HepG2 (cell line): ENCODE measurements at regions of chr6 and their contacts with region 1.

Region 1: GRCh38 chr6:41779793-41780545 is at the start of gene FRS3:
- DNase-seq: peak; percentile 95
- ATAC-seq: peak; percentile 90
- H3K4me3 ChIP-seq: peak within 1 kb of the TSS; percentile 82 to 93 (median 92)
- H3K27ac ChIP-seq: peak within 1 kb of the TSS; percentile 24
- H3K4me1 ChIP-seq: peaks cover 34% of the 10 kb centered on the region
- H3K27me3 ChIP-seq: no peaks in the 10 kb centered on the region; a peak in 2 of 5 replicates
- CTCF ChIP-seq: peak; percentile 99
- EP300 ChIP-seq: peak; percentile 61 to 75; a peak in 3 of 4 replicates
- POLR2A ChIP-seq: no peak
- RAD21 ChIP-seq: peak; percentile 100
- total RNA-seq, gene FRS3: 1.5 and 3.0 TPM in 2 replicates

Region 2: GRCh38 chr6:41602864-41603608 is 176.9 kb before region 1 on chr6:
- CTCF ChIA-PET with region 1: no interaction called
- POLR2A ChIA-PET with region 1: no interaction called
- in situ Hi-C with region 1: no loop called
- intact Hi-C with region 1: loop called (anchors 5 kb)
- DNase-seq: peak; percentile 86
- ATAC-seq: peak; percentile 68
- H3K4me3 ChIP-seq: no peak overlapping the region
- H3K27ac ChIP-seq: no peak overlapping the region
- H3K4me1 ChIP-seq: peaks cover 7% of the 10 kb centered on the region
- H3K27me3 ChIP-seq: peaks cover 3 to 12% of the 10 kb centered on the region in 2 experiments
- CTCF ChIP-seq: peak; percentile 97
- EP300 ChIP-seq: no peak
- POLR2A ChIP-seq: no peak
- RAD21 ChIP-seq: peak; percentile 92

Region 3: DNA sequence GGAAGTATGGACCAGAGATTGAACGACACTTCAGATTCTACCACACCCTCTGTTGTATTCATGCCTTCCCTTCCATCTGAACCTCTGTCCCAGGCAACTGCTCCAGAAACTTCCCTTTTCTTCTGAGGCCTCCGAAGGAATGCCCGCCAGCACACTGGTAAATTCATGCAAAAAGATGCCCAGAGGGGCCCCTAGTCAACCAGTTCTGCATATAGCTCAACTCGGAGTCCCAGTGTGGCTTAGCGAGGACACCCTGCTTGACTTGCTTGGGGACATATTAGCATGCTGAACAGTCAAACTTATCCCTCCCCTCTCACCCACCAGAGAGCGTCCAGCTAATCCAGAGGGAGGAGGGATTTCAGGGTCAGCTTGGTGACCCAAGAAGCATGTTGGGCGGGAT is 164.7 kb before region 1 on chr6:
- CTCF ChIA-PET with region 1: no interaction called
- POLR2A ChIA-PET with region 1: no interaction called
- in situ Hi-C with region 1: no loop called
- intact Hi-C with region 1: no loop called
- DNase-seq: no peak
- ATAC-seq: no peak; the same call in 2 of the 3 replicates
- H3K4me3 ChIP-seq: no peak overlapping the region
- H3K27ac ChIP-seq: no peak overlapping the region
- H3K4me1 ChIP-seq: peaks cover 10% of the 10 kb centered on the region
- H3K27me3 ChIP-seq: peaks cover 0 to 19% of the 10 kb centered on the region in 2 experiments; a peak in 2 of 5 replicates
- CTCF ChIP-seq: no peak
- EP300 ChIP-seq: no peak
- POLR2A ChIP-seq: no peak
- RAD21 ChIP-seq: no peak

Region 4: DNA sequence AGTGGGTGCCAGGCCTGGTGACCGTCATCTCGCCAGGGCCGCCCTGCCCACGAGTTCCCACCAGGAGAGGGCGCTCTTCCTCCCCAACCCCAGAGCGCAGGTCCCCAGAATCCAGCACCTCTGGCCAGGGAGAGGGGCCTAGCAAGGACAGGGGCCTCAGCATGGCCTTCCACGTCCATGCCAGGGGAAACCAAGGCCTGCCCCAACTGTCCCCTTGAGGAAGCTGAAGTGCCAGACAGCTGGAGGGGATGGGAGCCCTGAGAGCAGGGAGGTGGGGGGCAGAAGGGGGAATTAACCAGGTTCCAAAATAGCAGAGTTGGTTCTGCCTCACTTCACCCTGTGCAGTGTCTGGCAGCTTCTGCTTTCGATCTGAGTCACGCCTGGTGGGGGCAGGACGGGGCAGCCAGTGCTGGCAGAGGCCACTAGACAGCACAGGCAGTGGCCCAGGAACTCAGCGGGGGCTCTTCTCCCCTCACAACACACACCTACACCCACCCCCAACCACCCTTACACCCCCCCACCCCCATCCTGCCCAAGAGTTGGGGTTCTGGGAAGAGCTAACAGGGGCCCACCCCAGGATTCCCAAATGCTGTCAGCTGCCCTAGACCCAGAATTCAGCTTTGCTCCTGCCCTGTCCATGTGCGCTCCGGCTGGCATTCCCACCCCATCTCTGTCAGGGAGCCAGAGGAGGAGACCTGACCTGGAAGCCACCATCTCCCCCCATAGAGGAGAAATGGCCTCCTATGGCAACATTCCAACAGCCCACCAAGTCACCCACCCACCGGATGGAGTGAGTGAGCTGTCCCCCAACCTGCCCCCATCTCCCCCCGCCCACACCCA is 73.8 kb before region 1 on chr6:
- CTCF ChIA-PET with region 1: interaction called, 61 read pairs
- POLR2A ChIA-PET with region 1: no interaction called
- in situ Hi-C with region 1: no loop called
- intact Hi-C with region 1: loop called (anchors 1 kb)
- DNase-seq: peak; percentile 67
- ATAC-seq: peak; percentile 93
- H3K4me3 ChIP-seq: no peak overlapping the region
- H3K27ac ChIP-seq: no peak overlapping the region
- H3K4me1 ChIP-seq: peaks cover 18% of the 10 kb centered on the region
- H3K27me3 ChIP-seq: no peaks in the 10 kb centered on the region
- CTCF ChIP-seq: peak; percentile 99
- EP300 ChIP-seq: no peak
- POLR2A ChIP-seq: no peak
- RAD21 ChIP-seq: peak; percentile 92

Region 5: GRCh38 chr6:41735427-41736356 is 44.3 kb before region 1 on chr6 and contains the start of gene TFEB:
- CTCF ChIA-PET with region 1: interaction called, 44 read pairs
- POLR2A ChIA-PET with region 1: interaction called, 15 read pairs
- in situ Hi-C with region 1: loop called (anchors 5 kb)
- intact Hi-C with region 1: loop called (anchors 1 kb)
- DNase-seq: peak; percentile 90
- ATAC-seq: peak; percentile 60
- H3K4me3 ChIP-seq: peak within 1 kb of the TSS; percentile 51 to 83 (median 76)
- H3K27ac ChIP-seq: peak within 1 kb of the TSS; percentile 57
- H3K4me1 ChIP-seq: peaks cover 65% of the 10 kb centered on the region
- H3K27me3 ChIP-seq: no peaks in the 10 kb centered on the region; a peak in 1 of 5 replicates
- CTCF ChIP-seq: peak; percentile 94
- EP300 ChIP-seq: peak in 1 of 2 experiments; percentile 57; a peak in 2 of 4 replicates
- POLR2A ChIP-seq: no peak
- RAD21 ChIP-seq: peak; percentile 99
- total RNA-seq, gene TFEB: 12.8 and 13.3 TPM in 2 replicates

Region 6: GRCh38 chr6:41741625-41742489 is 38.1 kb before region 1 on chr6:
- CTCF ChIA-PET with region 1: interaction called, 44 read pairs
- POLR2A ChIA-PET with region 1: interaction called, 5 read pairs
- in situ Hi-C with region 1: loop called (anchors 5 kb)
- intact Hi-C with region 1: no loop called
- DNase-seq: peak; percentile 97
- ATAC-seq: peak; percentile 62
- H3K4me3 ChIP-seq: peak overlapping the region in 1 of 3 experiments; percentile 31; a peak in 1 of 6 replicates
- H3K27ac ChIP-seq: peak overlapping the region; percentile 69
- H3K4me1 ChIP-seq: peaks cover 97% of the 10 kb centered on the region
- H3K27me3 ChIP-seq: no peaks in the 10 kb centered on the region
- CTCF ChIP-seq: peak; percentile 56
- EP300 ChIP-seq: peak; percentile 64; a peak in 3 of 4 replicates
- POLR2A ChIP-seq: no peak
- RAD21 ChIP-seq: no peak; the same call in 1 of the 2 replicates

Region 7: DNA sequence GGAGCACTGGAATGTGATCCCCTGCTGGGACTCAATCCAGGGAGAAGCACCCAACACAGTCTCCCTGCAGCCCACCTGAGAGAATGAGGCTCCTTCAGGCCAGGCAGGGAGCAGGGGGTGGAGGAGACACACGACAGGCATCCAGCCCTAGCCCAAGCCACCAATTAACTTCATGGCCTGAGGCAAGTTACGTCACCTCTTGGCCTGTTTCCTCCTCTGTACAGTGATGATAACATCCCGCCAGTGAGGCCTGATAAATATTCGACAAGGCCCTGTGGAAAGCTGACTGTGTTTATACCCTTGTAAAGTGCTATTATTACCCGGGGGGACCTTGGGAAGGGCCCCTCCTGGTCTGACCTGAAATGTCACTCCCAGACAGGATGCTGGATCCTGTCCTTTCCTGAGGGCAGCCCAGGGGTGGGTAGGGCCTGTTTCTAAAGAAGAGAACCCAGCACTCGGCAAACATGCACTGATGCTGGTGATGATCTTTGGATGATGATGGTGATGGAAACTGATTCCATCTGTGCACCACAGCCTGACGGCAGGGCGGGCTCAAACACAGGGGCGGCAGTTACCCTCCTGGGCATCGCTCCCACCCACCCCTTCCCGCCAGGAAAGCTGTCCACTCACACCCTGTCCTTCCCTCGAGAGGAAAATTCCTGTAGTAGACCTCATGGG is 12.7 kb before region 1 on chr6:
- CTCF ChIA-PET with region 1: no interaction called
- POLR2A ChIA-PET with region 1: interaction called, 6 read pairs
- in situ Hi-C with region 1: no loop called
- intact Hi-C with region 1: loop called (anchors 1 kb)
- DNase-seq: peak; percentile 82
- ATAC-seq: peak; percentile 47
- H3K4me3 ChIP-seq: no peak overlapping the region
- H3K27ac ChIP-seq: no peak overlapping the region
- H3K4me1 ChIP-seq: peaks cover 45% of the 10 kb centered on the region
- H3K27me3 ChIP-seq: no peaks in the 10 kb centered on the region
- CTCF ChIP-seq: no peak
- EP300 ChIP-seq: no peak
- POLR2A ChIP-seq: no peak
- RAD21 ChIP-seq: no peak

Region 8: GRCh38 chr6:41936073-41936837 is 156.3 kb after region 1 on chr6:
- CTCF ChIA-PET with region 1: no interaction called
- POLR2A ChIA-PET with region 1: no interaction called
- in situ Hi-C with region 1: no loop called
- intact Hi-C with region 1: loop called (anchors 5 kb)
- DNase-seq: peak; percentile 87
- ATAC-seq: peak; percentile 80
- H3K4me3 ChIP-seq: no peak overlapping the region
- H3K27ac ChIP-seq: peak overlapping the region; percentile 3
- H3K4me1 ChIP-seq: peaks cover 30% of the 10 kb centered on the region
- H3K27me3 ChIP-seq: no peaks in the 10 kb centered on the region
- CTCF ChIP-seq: peak; percentile 92
- EP300 ChIP-seq: peak in 1 of 2 experiments; percentile 13; a peak in 1 of 4 replicates
- POLR2A ChIP-seq: peak in 1 of 2 experiments; percentile 9; a peak in 1 of 4 replicates
- RAD21 ChIP-seq: peak; percentile 72